ENCODE measurements at regions of chr6 and their contacts with region 1.

Region 1: DNA sequence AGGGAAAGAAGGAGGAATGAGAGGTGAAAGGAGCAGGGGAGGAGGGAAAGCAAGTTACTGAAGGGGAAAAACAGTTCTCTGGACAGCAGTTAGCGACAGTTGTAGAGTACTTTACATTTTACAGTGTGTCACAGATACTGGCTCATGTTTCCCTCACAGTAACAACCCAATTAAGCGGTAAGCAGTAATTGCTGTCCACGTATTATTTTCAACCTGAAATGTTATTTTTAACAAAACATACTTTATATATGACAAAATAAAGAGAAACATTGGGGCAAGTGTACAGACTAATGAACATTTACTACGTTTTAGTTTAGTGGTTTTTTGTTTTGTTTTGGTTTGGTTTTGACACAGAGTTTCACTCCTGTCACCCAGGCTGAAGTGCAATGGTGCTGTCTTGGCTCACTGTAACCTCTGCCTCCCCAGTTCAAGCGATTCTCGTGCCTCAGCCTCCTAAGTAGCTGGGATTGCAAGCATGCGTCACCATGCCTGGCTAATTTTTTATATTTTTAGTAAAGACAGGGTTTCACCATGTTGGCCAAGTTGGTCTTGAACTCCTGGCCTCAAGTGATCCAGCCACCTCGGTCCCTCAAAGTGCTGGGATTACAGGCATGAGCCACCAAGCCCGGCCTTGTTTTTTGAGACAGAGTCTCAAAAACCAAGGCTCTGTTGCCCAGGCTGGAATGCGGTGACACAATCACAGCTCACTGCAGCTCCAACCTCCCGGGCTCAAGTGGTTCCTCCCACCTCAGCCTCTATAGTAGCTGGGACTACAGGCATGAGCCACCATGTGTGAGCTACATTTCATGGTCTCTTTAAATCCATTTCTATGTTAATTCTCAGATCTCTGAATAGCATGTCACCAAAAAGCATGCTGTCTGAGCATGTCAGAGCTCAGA is 22.6 kb upstream of the BTN3A2 start:
- DNase-seq: no peak
- H3K4me3 Mint-ChIP-seq: peak overlapping the region; percentile 70
- H3K27ac Mint-ChIP-seq: peak overlapping the region; percentile 85
- H3K4me1 Mint-ChIP-seq: peaks cover 20% of the 10 kb centered on the region
- H3K27me3 Mint-ChIP-seq: peaks cover 18% of the 10 kb centered on the region

Region 2: DNA sequence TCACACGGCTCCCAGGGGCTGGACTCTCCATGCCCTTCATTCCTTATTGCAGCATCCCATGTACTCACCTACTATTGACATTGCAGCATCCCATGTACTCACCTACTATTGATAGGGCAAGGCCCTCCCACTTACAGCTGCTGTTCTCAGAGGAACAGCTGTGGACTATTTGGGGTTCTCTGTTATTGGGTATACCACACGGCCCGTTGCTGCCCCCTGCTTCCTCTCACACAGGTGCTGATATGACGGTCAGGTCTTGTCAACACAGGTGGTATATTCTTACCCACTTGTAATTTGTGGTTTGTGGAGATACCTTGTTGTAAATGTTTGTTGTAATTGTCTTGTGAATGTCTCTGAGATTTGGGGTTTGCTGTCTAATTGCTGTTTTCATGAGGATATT is 1828.8 kb before region 1 on chr6:
- CTCF ChIA-PET with region 1: no interaction called
- POLR2A ChIA-PET with region 1: no interaction called
- DNase-seq: no peak
- H3K4me3 Mint-ChIP-seq: no peak overlapping the region
- H3K27ac Mint-ChIP-seq: no peak overlapping the region
- H3K4me1 Mint-ChIP-seq: peaks cover 9% of the 10 kb centered on the region
- H3K27me3 Mint-ChIP-seq: no peaks in the 10 kb centered on the region

Region 3: DNA sequence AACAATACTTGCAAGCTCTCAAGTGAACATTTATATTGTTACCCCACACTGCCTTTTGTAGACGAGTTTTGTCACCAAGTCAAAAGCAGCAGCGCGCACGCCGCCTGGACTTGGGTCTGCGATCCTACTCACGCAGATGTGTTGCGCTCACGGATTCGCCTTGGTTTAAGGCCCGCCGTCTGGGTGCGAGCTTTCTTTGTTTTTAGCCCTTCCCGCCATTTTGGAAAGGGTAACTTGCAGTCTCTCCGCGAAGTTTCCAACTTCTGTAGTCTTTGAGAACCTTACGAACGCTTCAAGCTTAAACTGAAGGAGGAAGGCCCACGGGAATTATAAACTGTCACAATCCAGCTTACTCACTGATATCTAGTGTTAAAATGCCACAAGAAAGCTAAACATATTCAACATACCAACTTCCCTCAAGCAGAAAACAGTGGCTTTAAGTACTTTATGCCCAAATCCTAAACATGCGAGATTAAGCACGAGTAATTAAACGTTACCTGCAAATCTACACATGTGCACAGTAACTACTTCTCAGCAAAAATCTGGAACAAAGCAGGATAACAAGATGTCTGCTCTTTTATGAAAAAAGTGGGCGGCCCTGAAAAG is 57.7 kb before region 1 on chr6:
- CTCF ChIA-PET with region 1: no interaction called
- POLR2A ChIA-PET with region 1: no interaction called
- DNase-seq: peak; percentile 69
- H3K4me3 Mint-ChIP-seq: peak overlapping the region; percentile 92
- H3K27ac Mint-ChIP-seq: peak overlapping the region; percentile 100
- H3K4me1 Mint-ChIP-seq: peaks cover 38% of the 10 kb centered on the region
- H3K27me3 Mint-ChIP-seq: peaks cover 2% of the 10 kb centered on the region

Region 4: DNA sequence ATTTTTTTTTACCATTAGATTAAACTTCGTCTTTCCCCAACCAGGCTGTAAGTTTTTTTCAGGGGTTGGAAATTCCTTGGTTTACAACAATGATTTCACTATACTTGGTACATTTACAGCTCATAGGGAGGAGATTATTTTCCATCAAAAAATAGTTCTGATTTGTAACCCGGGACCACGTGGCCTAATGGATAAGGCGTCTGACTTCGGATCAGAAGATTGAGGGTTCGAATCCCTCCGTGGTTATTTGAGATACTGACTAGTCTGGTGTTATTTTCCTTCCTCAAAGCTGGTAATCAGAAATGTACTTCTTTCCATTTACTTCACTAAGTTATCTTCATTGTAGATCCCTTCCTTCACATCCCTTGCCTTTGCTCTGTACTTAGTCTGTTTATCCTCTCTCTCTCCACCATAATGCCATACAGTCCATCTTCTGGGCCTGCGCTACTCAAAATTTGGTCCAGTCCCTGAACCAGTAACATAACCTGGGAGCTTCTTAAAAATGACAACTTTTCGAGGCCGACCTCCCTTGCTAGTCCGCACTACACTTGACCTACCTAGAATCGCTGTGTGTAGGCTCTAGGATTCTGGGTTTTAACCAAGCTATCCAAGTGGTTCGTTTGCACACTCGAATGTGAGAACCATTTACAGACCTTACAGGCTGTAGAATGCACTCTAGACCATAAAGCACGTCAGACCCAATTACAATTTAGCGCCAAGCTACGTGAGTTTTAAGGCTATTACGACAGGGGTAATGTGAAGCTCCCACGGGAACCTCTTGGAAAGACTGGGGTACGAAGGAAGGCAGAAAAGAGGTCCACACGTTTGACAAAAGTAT is 19.5 kb before region 1 on chr6:
- CTCF ChIA-PET with region 1: interaction called, 10 read pairs
- POLR2A ChIA-PET with region 1: no interaction called
- DNase-seq: peak; percentile 76
- H3K4me3 Mint-ChIP-seq: peak overlapping the region; percentile 78
- H3K27ac Mint-ChIP-seq: peak overlapping the region; percentile 86
- H3K4me1 Mint-ChIP-seq: peaks cover 56% of the 10 kb centered on the region
- H3K27me3 Mint-ChIP-seq: peaks cover 21% of the 10 kb centered on the region

Region 5: GRCh38 chr6:26329763-26330511 is 12.4 kb before region 1 on chr6:
- CTCF ChIA-PET with region 1: interaction called, 20 read pairs
- POLR2A ChIA-PET with region 1: no interaction called
- DNase-seq: peak; percentile 54
- H3K4me3 Mint-ChIP-seq: peak overlapping the region; percentile 74
- H3K27ac Mint-ChIP-seq: peak overlapping the region; percentile 58
- H3K4me1 Mint-ChIP-seq: peaks cover 59% of the 10 kb centered on the region
- H3K27me3 Mint-ChIP-seq: peaks cover 39% of the 10 kb centered on the region

Region 6: DNA sequence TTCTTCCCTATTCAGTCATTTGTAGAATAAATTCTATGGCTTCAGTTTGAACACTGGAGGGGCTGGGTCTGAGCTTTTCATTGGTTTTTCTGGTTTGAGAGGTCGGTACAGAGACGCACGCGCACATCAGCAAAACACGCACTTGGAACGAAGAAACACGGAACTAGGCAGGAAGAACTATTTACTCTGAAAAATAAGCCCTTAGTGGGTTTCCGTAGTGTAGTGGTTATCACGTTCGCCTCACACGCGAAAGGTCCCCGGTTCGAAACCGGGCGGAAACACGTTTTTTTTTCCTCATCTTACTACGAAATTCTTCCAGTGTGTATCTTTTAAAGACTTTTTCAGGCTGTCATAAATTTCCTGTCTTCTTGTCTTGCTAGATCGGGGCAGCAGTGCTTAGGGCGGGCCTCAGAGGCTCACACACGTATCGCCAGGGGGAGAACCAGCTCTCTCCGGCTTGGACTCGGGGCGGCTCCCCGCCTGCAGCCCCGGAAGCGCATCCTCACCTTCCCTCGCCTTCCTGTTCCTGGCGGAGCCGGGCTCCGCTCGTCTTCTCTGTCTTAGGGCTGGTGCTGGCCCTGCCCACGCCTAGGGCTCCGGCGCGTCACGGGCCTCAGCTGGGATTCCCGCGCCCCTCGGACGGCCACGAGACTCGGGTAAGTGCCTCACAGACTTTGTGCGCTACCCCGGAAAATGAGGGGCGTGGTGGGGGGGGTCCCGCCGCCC is 195.7 kb after region 1 on chr6 and contains the start of gene HMGN4:
- CTCF ChIA-PET with region 1: interaction called, 15 read pairs
- POLR2A ChIA-PET with region 1: no interaction called
- DNase-seq: peak; percentile 86
- H3K4me3 Mint-ChIP-seq: peak within 1 kb of the TSS; percentile 85
- H3K27ac Mint-ChIP-seq: peak within 1 kb of the TSS; percentile 99
- H3K4me1 Mint-ChIP-seq: peaks cover 62% of the 10 kb centered on the region
- H3K27me3 Mint-ChIP-seq: no peaks in the 10 kb centered on the region
- total RNA-seq, gene HMGN4: 85.7 to 93.0 TPM

Region 7: DNA sequence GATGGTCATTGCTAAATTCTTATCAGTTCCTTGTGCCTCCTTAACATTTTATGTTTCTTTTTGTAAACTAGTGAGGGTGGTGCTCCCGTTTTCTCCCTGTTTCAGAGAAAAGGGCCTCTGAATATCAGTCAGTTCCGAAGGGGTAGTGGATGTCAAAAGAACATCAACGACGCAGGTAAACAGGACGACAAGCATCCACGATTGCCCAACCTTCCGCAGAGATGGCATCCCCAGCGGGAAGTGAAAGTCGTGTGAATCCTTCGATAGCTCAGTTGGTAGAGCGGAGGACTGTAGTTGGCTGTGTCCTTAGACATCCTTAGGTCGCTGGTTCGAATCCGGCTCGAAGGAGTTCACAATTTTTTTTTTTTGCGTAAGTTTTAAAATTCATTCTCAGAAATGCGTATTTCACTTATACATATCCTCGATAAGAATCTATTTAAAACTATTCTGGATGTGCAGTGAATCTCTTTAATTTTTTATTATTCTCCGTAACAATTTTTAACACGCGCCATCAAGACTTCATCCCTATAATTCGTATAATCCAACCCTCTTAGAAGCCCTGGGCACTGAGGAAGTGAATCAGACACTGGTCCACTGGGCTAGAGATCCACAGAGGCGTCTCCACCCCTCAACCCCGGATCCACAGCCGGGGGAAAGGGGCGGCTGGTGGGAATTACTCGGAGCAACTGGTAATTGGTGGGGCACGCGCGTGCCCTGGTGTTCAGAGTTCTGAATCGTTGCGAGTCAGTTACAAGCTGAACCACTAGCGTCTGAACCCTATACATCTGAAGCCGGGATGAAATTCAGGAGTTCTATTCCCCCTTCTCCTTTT is 226.5 kb after region 1 on chr6:
- CTCF ChIA-PET with region 1: interaction called, 25 read pairs
- POLR2A ChIA-PET with region 1: no interaction called
- DNase-seq: peak; percentile 97
- H3K4me3 Mint-ChIP-seq: peak overlapping the region; percentile 90
- H3K27ac Mint-ChIP-seq: peak overlapping the region; percentile 94
- H3K4me1 Mint-ChIP-seq: peaks cover 41% of the 10 kb centered on the region
- H3K27me3 Mint-ChIP-seq: peaks cover 7% of the 10 kb centered on the region

Measured in activated CD4-positive, alpha-beta T cell treated with anti-CD3 and anti-CD28 coated beads, Interleukin-2, amount 10 ng/mL, durations not matched to agents 7 days and 5 days (primary cell).